ENCODE measurements at regions of chr2 and their contacts with region 1.

Region 1: GRCh38 chr2:72887754-72888437 is 688 bp downstream of the SPR start:
- DNase-seq: peak; percentile 92
- H3K4me3 Mint-ChIP-seq: peak overlapping the region; percentile 75
- H3K27ac Mint-ChIP-seq: no peak overlapping the region
- H3K4me1 Mint-ChIP-seq: peaks cover 26% of the 10 kb centered on the region
- H3K27me3 Mint-ChIP-seq: no peaks in the 10 kb centered on the region
- CTCF ChIP-seq: peak; percentile 75

Region 2: GRCh38 chr2:72770879-72771461 is 116.9 kb before region 1 on chr2:
- CTCF ChIA-PET with region 1: interaction called, 11 read pairs
- POLR2A ChIA-PET with region 1: no interaction called
- intact Hi-C with region 1: loop called (anchors 1 kb)
- DNase-seq: peak; percentile 83
- H3K4me3 Mint-ChIP-seq: no peak overlapping the region
- H3K27ac Mint-ChIP-seq: no peak overlapping the region
- H3K4me1 Mint-ChIP-seq: no peaks in the 10 kb centered on the region
- H3K27me3 Mint-ChIP-seq: no peaks in the 10 kb centered on the region
- CTCF ChIP-seq: peak; percentile 73

Region 3: DNA sequence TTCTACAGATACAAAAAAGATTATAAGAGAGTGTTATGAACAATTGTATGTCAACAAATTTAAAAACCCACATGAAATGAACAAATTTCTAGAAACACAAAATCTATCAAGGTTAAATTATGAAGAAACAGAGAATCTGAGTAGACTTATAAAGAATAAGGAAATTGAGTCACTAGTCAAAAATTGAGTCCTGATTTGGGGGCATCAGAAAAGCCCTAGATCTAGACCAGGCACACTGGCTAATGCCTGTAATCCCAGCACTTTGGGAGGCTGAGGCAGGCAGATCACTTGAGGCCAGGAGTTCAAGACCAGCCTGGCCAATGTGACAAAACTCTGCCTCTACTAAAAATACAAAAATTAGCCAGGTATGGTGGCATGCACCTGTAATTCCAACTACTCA is 16.0 kb before region 1 on chr2:
- CTCF ChIA-PET with region 1: interaction called, 18 read pairs
- POLR2A ChIA-PET with region 1: interaction called, 6 read pairs
- intact Hi-C with region 1: no loop called
- DNase-seq: no peak
- H3K4me3 Mint-ChIP-seq: no peak overlapping the region
- H3K27ac Mint-ChIP-seq: no peak overlapping the region
- H3K4me1 Mint-ChIP-seq: no peaks in the 10 kb centered on the region
- H3K27me3 Mint-ChIP-seq: peaks cover 72% of the 10 kb centered on the region
- CTCF ChIP-seq: no peak

Region 4: GRCh38 chr2:72915907-72916742 is 28.2 kb after region 1 on chr2:
- CTCF ChIA-PET with region 1: interaction called, 17 read pairs
- POLR2A ChIA-PET with region 1: interaction called, 6 read pairs
- intact Hi-C with region 1: no loop called
- DNase-seq: peak; percentile 24
- H3K4me3 Mint-ChIP-seq: peak overlapping the region; percentile 58
- H3K27ac Mint-ChIP-seq: no peak overlapping the region
- H3K4me1 Mint-ChIP-seq: peaks cover 6% of the 10 kb centered on the region
- H3K27me3 Mint-ChIP-seq: peaks cover 76% of the 10 kb centered on the region
- CTCF ChIP-seq: no peak

Region 5: GRCh38 chr2:72973566-72974435 is 85.9 kb after region 1 on chr2:
- CTCF ChIA-PET with region 1: interaction called, 90 read pairs
- POLR2A ChIA-PET with region 1: interaction called, 3 read pairs
- intact Hi-C with region 1: loop called (anchors 1 kb)
- DNase-seq: peak; percentile 64
- H3K4me3 Mint-ChIP-seq: no peak overlapping the region
- H3K27ac Mint-ChIP-seq: no peak overlapping the region
- H3K4me1 Mint-ChIP-seq: no peaks in the 10 kb centered on the region
- H3K27me3 Mint-ChIP-seq: no peaks in the 10 kb centered on the region
- CTCF ChIP-seq: peak; percentile 85

Region 6: GRCh38 chr2:73020657-73021370 is 132.9 kb after region 1 on chr2:
- CTCF ChIA-PET with region 1: no interaction called
- POLR2A ChIA-PET with region 1: no interaction called
- intact Hi-C with region 1: no loop called
- DNase-seq: peak; percentile 32
- H3K4me3 Mint-ChIP-seq: no peak overlapping the region
- H3K27ac Mint-ChIP-seq: no peak overlapping the region
- H3K4me1 Mint-ChIP-seq: no peaks in the 10 kb centered on the region
- H3K27me3 Mint-ChIP-seq: no peaks in the 10 kb centered on the region
- CTCF ChIP-seq: no peak

Region 7: GRCh38 chr2:73163483-73164367 is 275.8 kb after region 1 on chr2:
- CTCF ChIA-PET with region 1: interaction called, 8 read pairs
- POLR2A ChIA-PET with region 1: interaction called, 5 read pairs
- intact Hi-C with region 1: loop called (anchors 1 kb)
- DNase-seq: peak; percentile 72
- H3K4me3 Mint-ChIP-seq: no peak overlapping the region
- H3K27ac Mint-ChIP-seq: no peak overlapping the region
- H3K4me1 Mint-ChIP-seq: no peaks in the 10 kb centered on the region
- H3K27me3 Mint-ChIP-seq: peaks cover under 1% of the 10 kb centered on the region
- CTCF ChIP-seq: peak; percentile 91

Measured in MCF 10A (cell line).